ENCODE measurements at regions of chr1 and their contacts with region 1.

Region 1: DNA sequence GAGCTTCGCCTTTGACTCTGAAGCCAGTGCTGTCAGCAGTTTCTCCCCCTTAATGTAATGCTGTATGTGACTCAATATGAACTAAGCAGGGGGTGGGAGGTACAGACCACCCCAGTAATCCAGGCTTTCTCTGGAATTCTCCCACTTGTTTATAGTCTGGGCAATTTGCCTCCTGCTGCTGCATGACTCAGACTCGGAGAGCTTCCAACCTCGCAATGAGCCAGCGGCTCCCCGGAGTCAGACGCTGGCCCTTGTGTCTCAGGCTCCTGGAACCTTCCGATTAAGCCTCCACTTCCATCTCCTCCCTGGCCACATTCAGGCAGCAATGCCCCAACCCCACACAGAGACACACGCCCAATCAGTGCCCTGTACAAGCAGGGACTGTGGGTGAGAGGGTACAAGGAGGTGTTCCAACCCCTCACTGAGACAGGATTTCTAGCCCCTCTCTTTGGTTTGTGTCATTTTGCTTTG is 471.7 kb upstream of the VAMP3 start:
- DNase-seq: peak; percentile 71 to 82 (median 78)
- ATAC-seq: peak; percentile 83 to 90
- H3K4me3 ChIP-seq: no peak overlapping the region
- H3K27ac ChIP-seq: peak overlapping the region; percentile 37
- H3K4me1 ChIP-seq: peaks cover 2% of the 10 kb centered on the region
- H3K27me3 ChIP-seq: no peaks in the 10 kb centered on the region

Region 2: DNA sequence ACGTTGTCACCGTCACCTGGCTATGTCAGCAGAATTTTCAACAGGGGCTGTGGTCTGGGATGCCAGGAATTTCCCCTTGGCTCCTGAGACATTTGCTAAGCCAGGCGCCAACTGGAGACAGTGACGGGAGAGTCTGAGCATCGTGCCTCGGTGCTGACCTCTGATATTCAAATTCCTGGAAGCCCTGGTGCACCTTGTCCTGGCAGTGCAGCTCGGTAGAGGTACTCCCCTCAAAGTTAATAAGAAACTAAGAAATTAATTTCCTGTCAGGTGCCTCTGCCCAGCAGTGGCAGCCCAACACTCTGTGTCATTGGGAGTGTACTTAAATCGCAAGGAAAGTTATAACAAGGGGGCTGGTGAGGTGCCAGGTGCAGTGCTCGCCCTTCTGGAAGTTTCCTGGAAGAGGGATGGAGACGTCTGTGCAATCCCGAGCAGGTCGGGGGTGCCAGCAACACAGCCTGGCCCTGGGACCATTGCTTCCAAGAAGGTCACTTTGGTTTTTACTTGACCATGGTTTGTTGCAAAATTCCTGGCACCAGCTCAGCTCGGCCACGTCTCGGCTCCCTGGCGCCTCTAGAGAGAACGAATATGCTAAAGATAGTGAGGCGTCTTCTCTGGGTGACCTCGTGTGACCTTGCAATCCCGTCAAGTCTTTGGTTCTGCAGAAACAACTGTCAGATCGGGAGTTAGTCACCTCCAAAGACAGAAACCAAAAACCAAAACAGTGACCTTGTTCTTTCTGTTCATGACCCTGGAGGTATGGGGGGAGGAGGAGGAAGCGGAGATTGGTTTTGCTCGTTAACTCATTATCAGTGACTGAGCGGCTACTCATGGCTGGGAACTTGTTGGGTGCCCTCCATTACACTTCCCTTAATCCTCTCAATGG is 322.2 kb after region 1 on chr1:
- intact Hi-C with region 1: loop called in 1 of 4 experiments (anchors 10 kb)
- DNase-seq: peak; percentile 44 to 77 (median 63)
- ATAC-seq: peak in 1 of 2 donors; percentile 47
- H3K4me3 ChIP-seq: no peak overlapping the region
- H3K27ac ChIP-seq: peak overlapping the region; percentile 19
- H3K4me1 ChIP-seq: peaks cover 11% of the 10 kb centered on the region
- H3K27me3 ChIP-seq: no peaks in the 10 kb centered on the region

Measured in right cardiac atrium (tissue), 5 donors.